Heart left ventricle (tissue), 16 donors: ENCODE measurements at regions of chr2 and their contacts with region 1.

Region 1: GRCh38 chr2:46876741-46877384 is 38.7 kb downstream of the MCFD2 start:
- DNase-seq: peak in 3 of 5 donors; percentile 52 to 68 (median 65)
- ATAC-seq: peak; percentile 35 to 45 (median 42)
- H3K4me3 ChIP-seq: no peak overlapping the region
- H3K27ac ChIP-seq: peak overlapping the region in 9 of 12 donors; percentile 33 to 77 (median 49)
- H3K4me1 ChIP-seq: peaks cover 4 to 67% (median 52%) of the 10 kb centered on the region in 12 donors
- H3K27me3 ChIP-seq: no peaks in the 10 kb centered on the region
- CTCF ChIP-seq: peak; percentile 33 to 79 (median 66)
- POLR2A ChIP-seq: no peak

Region 2: DNA sequence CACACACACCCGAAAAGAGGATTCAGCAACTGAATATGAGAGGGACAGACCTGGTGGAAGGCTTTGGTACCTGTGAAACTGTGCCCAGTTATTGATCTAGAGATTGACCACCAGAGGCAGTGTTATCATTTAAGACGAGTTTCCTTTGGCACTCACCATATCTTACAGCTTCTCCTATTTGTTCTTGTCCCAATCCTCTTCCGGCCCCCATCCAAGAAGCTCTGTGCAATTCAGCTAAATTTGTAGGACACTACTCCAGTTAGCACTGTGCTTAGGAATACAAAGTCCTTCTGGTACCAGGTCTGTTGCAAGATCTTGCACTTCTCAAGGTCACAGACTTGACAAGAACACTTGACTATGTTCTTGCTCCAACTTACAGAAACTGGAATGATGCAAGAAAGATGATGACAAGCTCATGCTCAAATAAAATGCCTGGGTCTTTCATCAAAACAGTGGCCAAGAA is 219.8 kb before region 1 on chr2:
- intact Hi-C with region 1: loop called in 1 of 10 experiments (anchors 5 kb)
- DNase-seq: peak in 1 of 5 donors; percentile 40
- ATAC-seq: peak in 3 of 4 donors; percentile 45 to 83 (median 76)
- H3K4me3 ChIP-seq: no peak overlapping the region
- H3K27ac ChIP-seq: peak overlapping the region in 3 of 12 donors; percentile 14 to 41 (median 37)
- H3K4me1 ChIP-seq: peaks cover 0 to 18% (median 12%) of the 10 kb centered on the region in 12 donors
- H3K27me3 ChIP-seq: no peaks in the 10 kb centered on the region
- CTCF ChIP-seq: peak in 11 of 12 donors; percentile 14 to 47 (median 29)
- POLR2A ChIP-seq: no peak

Region 3: GRCh38 chr2:46803911-46804670 is 72.8 kb before region 1 on chr2:
- intact Hi-C with region 1: loop called in 7 of 10 experiments (anchors 2 to 5 kb)
- DNase-seq: no peak
- ATAC-seq: peak in 3 of 4 donors; percentile 8 to 40 (median 23)
- H3K4me3 ChIP-seq: no peak overlapping the region
- H3K27ac ChIP-seq: peak overlapping the region in 7 of 12 donors; percentile 22 to 69 (median 49)
- H3K4me1 ChIP-seq: peaks cover 0 to 33% (median 11%) of the 10 kb centered on the region in 12 donors
- H3K27me3 ChIP-seq: no peaks in the 10 kb centered on the region
- CTCF ChIP-seq: no peak
- POLR2A ChIP-seq: no peak

Region 4: GRCh38 chr2:46818121-46818888 is 58.6 kb before region 1 on chr2:
- intact Hi-C with region 1: loop called in 6 of 10 experiments (anchors 2 to 5 kb)
- DNase-seq: peak; percentile 82 to 97 (median 89)
- ATAC-seq: peak; percentile 89 to 96 (median 94)
- H3K4me3 ChIP-seq: no peak overlapping the region
- H3K27ac ChIP-seq: peak overlapping the region; percentile 77 to 95 (median 88)
- H3K4me1 ChIP-seq: peaks cover 20 to 74% (median 53%) of the 10 kb centered on the region in 12 donors
- H3K27me3 ChIP-seq: no peaks in the 10 kb centered on the region
- CTCF ChIP-seq: no peak
- POLR2A ChIP-seq: no peak